ENCODE measurements at regions of chr18 and their contacts with region 1.

Region 1: GRCh38 chr18:61371111-61371510 is 37.9 kb downstream of the CDH20 start:
- DNase-seq: no peak
- ATAC-seq: no peak
- H3K4me3 ChIP-seq: no peak overlapping the region
- H3K27ac ChIP-seq: no peak overlapping the region
- H3K4me1 ChIP-seq: no peaks in the 10 kb centered on the region
- H3K27me3 ChIP-seq: no peaks in the 10 kb centered on the region
- CTCF ChIP-seq: no peak

Region 2: DNA sequence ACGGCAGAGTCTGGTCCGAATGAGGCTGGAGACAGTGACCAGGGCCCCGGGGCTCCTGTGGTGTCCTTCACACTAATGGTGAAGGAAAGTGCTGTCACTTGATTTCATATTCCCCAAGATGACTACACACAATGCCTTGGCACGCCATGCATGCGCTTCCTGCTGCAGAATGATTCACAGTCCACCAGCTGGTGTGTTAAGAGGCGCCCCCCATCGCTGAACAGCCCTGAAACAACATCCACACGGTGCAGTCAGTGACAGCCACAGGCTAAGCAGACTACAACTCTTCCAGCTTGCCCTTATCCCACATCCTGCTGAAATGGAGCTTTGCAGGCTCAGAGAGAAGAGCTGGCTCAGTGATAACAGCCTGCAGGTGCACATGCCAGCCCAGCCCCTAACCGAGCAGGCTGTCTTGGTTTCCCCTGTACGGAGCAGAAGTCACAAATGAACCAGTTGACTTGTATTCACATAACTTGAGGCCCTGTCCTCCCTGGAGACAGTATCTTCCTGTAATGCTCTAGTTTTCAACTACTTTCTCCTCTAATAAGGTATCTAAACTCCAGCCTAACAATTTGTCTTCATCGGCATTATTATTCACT is 62.2 kb before region 1 on chr18:
- intact Hi-C with region 1: no loop called
- DNase-seq: no peak
- ATAC-seq: no peak
- H3K4me3 ChIP-seq: no peak overlapping the region
- H3K27ac ChIP-seq: no peak overlapping the region
- H3K4me1 ChIP-seq: no peaks in the 10 kb centered on the region
- H3K27me3 ChIP-seq: no peaks in the 10 kb centered on the region
- CTCF ChIP-seq: no peak

Region 3: DNA sequence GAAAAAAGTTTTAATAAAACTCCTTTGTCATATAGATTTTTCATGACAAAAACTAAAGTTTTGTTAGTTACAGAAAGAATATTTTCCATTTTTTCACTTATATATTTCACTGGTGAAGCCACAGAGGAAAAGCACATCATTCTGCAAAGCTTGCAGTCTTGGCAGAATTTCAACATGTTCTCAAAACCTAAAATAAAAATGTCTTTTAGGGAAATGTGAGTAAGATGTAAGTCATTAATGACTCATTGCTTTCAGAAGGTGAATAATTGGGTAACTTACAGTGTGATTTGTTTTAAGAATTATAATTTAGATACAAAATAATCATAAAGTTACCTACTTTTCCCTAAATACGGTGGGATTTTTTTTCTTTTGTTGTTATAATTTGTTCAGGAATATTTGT is 910.6 kb after region 1 on chr18:
- intact Hi-C with region 1: no loop called
- DNase-seq: no peak
- ATAC-seq: no peak
- H3K4me3 ChIP-seq: no peak overlapping the region
- H3K27ac ChIP-seq: peak overlapping the region in 1 of 10 donors; percentile 53
- H3K4me1 ChIP-seq: peaks cover 0 to 47% (median 16%) of the 10 kb centered on the region in 9 donors
- H3K27me3 ChIP-seq: no peaks in the 10 kb centered on the region
- CTCF ChIP-seq: no peak

Region 4: GRCh38 chr18:63054901-63055584 is 1683.9 kb after region 1 on chr18:
- intact Hi-C with region 1: loop called in 1 of 10 experiments (anchors 5 kb)
- DNase-seq: no peak
- ATAC-seq: no peak
- H3K4me3 ChIP-seq: no peak overlapping the region
- H3K27ac ChIP-seq: no peak overlapping the region
- H3K4me1 ChIP-seq: no peaks in the 10 kb centered on the region
- H3K27me3 ChIP-seq: no peaks in the 10 kb centered on the region
- CTCF ChIP-seq: no peak

Measured in heart right ventricle (tissue), 16 donors.